K562 (cell line): ENCODE measurements at regions of chr17 and their contacts with region 1.

Region 1: DNA sequence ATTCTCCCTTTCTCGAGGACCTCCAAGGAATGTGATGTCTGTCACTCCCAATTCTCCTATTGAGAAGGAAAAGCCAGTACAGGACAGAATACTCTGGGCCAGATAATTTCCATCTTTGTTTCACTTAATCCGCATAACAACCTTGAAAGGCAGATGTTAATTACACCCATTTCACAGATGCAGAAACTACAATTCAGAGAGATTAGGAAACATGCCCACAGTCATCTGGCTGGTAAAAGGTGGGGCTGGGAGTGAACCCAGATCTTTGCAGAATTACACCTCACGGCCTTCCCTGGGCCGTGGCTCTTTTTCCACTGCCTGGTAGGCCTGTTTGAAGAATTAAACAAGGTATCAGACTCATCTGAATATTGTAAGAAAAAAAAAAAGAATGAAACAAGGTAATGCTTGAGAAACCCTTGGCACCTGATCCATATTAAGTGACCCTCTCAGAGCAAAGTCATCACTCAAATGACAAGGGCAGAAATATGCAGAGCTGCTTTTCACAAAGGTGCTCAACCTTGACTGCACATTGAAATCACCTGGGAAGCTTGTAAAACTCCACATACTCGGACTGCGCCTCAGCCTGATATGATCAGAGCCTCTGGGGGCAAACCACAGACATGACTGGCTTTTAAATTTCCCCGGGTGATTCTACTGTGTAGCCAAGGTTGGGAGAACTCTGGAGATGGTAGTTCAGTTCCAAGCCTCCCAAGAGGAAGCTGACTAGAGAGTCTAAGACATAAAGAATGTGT is 16.6 kb upstream of the G6PC1 start:
- DNase-seq: no peak
- ATAC-seq: no peak; the same call in 2 of the 3 replicates
- H3K4me3 ChIP-seq: no peak overlapping the region
- H3K27ac ChIP-seq: no peak overlapping the region
- H3K4me1 ChIP-seq: peaks cover 3 to 7% of the 10 kb centered on the region in 2 experiments; a peak in 2 of 5 replicates
- H3K27me3 ChIP-seq: no peaks in the 10 kb centered on the region
- CTCF ChIP-seq: no peak
- EP300 ChIP-seq: no peak
- POLR2A ChIP-seq: no peak
- RAD21 ChIP-seq: no peak

Region 2: DNA sequence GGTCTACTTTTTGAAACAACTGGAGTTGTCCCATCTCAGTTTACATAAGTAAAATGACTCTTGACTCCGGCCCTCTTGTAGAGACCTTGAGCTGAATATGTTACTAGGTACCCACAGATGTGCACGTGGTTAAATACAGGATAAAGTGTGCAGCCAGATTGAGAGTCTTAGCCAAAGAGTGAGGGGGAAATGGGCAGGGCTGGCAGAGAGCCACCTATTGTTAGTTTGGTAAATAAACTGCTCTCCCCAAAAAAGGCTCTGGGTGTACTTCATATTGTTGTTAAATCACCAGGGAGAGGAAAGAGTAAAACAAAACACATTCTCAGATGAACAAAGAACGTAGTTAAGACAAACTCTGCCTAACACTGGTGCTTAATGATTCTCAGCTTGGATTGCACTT is 36.9 kb after region 1 on chr17:
- CTCF ChIA-PET with region 1: no interaction called
- POLR2A ChIA-PET with region 1: no interaction called
- in situ Hi-C with region 1: no loop called
- intact Hi-C with region 1: loop called (anchors 5 kb)
- DNase-seq: no peak
- ATAC-seq: no peak
- H3K4me3 ChIP-seq: no peak overlapping the region
- H3K27ac ChIP-seq: no peak overlapping the region
- H3K4me1 ChIP-seq: no peaks in the 10 kb centered on the region; a peak in 1 of 5 replicates
- H3K27me3 ChIP-seq: no peaks in the 10 kb centered on the region
- CTCF ChIP-seq: no peak
- EP300 ChIP-seq: no peak
- POLR2A ChIP-seq: no peak
- RAD21 ChIP-seq: no peak